Psoas muscle (tissue), 8 donors: ENCODE measurements at regions of chr2 and their contacts with region 1.

Region 1: DNA sequence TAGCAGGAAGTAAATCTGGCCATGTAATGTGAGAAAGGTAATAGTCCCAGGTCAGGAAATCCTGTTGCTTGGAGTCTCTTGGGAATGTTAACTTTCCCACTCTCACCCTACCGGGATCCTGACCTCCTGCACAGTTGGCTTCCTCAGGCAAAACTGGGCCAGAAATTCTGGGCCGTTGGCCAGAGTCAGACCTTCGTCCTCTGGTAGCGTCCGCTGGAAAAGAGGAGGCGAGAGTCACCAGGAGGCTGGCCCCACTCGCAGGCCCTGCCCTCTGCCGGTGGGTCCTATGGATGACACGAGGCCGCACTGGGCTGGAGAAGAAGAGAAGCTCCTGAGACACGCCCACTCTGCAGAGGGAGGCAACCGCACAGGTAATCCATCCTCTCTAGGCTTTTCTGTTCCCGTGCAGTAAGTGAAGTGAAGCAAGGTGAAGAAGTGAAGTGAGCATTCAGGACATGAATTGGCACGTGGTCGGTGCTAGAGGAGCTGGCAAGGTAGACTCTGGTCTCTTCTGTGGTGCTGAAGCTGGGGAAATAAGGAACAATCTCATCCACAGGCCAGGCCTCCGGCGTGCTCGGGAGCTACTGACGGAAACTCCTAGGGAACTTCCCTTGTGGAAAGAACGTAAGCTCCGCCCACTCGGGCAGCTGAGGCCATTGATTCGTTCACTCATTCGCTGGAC is 182.7 kb upstream of the GLI2 start:
- DNase-seq: peak; percentile 90 to 96
- ATAC-seq: peak; percentile 89 to 97 (median 94)
- H3K4me3 ChIP-seq: no peak overlapping the region
- H3K27ac ChIP-seq: peak overlapping the region; percentile 10
- H3K4me1 ChIP-seq: peaks cover 31% of the 10 kb centered on the region
- H3K27me3 ChIP-seq: no peaks in the 10 kb centered on the region
- CTCF ChIP-seq: peak; percentile 87

Region 2: DNA sequence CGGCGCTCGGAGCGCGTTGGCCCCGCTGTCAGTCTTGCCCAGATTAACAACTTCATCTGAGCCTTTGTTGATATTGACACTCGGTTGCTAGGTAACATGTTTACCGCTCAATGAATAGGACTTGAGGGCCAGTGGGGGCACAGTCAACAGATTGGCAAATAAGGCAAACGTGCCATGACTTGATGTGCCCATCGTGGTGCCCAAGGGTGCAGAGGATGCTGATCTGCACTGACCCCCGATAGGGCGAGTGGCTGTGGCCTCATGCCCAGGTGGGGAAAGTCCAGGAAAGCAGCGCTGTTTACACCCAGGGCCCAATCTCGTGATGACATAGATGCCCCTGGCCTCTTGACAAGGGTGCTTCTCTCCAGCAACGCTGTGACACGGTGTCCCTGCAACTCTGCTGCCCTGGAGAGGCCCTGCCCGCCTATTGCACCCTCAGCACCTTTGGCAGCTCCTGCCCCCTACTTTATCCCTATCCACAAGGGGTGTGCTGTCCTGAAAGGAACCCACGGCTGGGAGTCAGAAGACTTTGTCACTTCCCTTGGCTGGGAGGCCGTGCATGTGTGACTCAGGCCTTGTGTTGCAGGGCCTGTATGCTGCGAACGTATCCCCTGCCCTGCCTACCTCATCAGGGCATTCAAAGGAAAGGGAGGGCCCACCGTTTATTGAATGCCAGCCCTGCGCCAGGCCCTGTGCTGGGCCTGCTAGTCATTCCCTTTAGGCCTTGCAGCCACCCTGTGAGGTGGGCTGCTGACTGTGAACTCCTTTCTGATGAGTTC is 49.0 kb before region 1 on chr2:
- intact Hi-C with region 1: loop called in 1 of 2 experiments (anchors 5 kb)
- DNase-seq: peak; percentile 75 to 94
- ATAC-seq: peak; percentile 89 to 94 (median 92)
- H3K4me3 ChIP-seq: no peak overlapping the region
- H3K27ac ChIP-seq: peak overlapping the region; percentile 80
- H3K4me1 ChIP-seq: peaks cover 15% of the 10 kb centered on the region
- H3K27me3 ChIP-seq: no peaks in the 10 kb centered on the region
- CTCF ChIP-seq: peak; percentile 7

Region 3: DNA sequence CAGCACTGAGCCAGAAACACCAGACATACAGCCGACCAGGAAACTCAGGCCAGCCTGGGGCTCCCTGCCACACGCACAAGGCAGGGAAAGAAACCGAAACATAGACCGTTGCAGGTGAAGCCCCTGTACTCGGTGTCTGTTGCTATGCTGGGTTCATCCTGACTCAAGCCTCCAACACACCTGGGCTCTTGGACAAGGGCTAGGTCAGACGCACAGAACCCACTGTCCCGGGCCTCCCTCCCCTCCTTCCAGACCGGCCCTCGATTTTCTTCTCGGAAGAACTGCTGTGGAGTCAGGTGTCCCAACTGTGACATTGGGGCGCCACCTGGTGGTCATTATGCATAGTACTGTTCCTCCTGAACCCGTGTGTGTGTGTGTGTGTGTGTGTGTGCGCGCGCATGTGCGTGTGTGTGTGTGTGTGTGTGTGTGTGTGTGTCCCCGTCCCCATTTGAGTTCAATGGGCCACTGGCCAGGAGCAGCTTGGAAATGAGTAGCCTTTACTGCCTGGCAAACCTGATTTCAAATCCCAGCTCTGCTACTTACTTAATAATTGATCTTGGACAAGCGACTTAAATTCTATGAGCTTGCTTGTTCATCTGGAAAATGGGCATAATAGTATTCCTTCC is 127.3 kb after region 1 on chr2:
- intact Hi-C with region 1: loop called (anchors 5 to 10 kb)
- DNase-seq: peak; percentile 85 to 89
- ATAC-seq: peak; percentile 78 to 91 (median 86)
- H3K4me3 ChIP-seq: no peak overlapping the region
- H3K27ac ChIP-seq: no peak overlapping the region
- H3K4me1 ChIP-seq: peaks cover 3% of the 10 kb centered on the region
- H3K27me3 ChIP-seq: peaks cover 0 to 5% (median 0%) of the 10 kb centered on the region in 3 donors
- CTCF ChIP-seq: peak; percentile 45